SK-N-SH (cell line): ENCODE measurements at regions of chr9 and their contacts with region 1.

Region 1: GRCh38 chr9:98056269-98057137 is at the start of gene NANS:
- DNase-seq: peak; percentile 98
- H3K4me3 ChIP-seq: peak within 1 kb of the TSS; percentile 67 to 96
- H3K27ac ChIP-seq: peak within 1 kb of the TSS; percentile 81 to 85
- H3K4me1 ChIP-seq: peaks cover 3 to 12% of the 10 kb centered on the region in 2 experiments; a peak in 2 of 4 replicates
- H3K27me3 ChIP-seq: no peaks in the 10 kb centered on the region
- CTCF ChIP-seq: peak; percentile 18; the same call in 1 of the 2 replicates
- EP300 ChIP-seq: peak in 1 of 2 experiments; percentile 41; a peak in 1 of 4 replicates
- RAD21 ChIP-seq: peak; percentile 33
- polyA plus RNA-seq, gene NANS: 53.5 and 61.3 TPM in 2 replicates

Region 2: GRCh38 chr9:97666907-97667686 is 389.4 kb before region 1 on chr9:
- CTCF ChIA-PET with region 1: no interaction called
- POLR2A ChIA-PET with region 1: no interaction called
- DNase-seq: no peak
- H3K4me3 ChIP-seq: no peak overlapping the region
- H3K27ac ChIP-seq: no peak overlapping the region
- H3K4me1 ChIP-seq: no peaks in the 10 kb centered on the region
- H3K27me3 ChIP-seq: no peaks in the 10 kb centered on the region
- CTCF ChIP-seq: no peak
- EP300 ChIP-seq: no peak
- RAD21 ChIP-seq: no peak

Region 3: DNA sequence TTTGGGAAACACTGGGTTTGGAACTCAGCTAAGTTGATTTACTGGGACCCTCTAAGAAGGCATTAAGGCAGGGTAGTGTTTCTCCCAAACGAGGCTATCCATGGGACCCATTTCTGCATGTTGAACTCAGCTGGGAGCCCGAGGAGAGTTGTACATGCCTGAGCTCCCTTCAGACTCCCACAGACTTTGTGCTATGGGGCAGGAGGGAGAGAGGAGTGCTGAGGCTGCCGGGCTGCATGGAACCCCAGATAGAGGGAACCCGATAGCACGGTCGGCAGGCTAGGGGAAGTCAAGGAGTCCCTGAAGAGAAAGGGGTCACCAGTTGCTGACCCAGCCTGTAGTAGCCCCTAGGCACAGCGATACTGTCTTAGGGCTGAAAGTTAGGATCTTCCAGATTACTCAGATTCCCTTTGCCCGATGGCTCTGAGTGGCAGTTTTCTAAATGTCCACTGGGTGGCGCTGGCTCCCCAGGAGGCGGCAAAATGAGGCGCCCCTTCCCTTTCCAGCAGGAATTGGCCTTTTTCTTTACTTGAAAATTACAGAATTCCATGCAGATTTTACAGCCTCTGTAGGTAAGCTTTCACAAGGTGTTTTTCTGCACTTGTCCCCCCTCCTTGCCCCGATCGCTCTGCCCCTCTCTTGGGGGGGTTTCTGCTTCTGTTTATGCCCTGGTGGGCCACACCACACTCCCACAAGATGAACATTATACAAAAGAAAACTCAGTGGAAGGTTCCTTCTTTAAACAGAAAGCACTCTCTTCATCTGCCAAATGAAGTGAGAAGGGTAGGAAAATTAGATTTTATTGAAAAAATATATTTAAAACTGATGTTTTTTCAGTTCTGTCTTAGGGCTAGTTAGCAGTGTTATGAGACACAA is 17.9 kb after region 1 on chr9:
- CTCF ChIA-PET with region 1: interaction called, 15 read pairs
- POLR2A ChIA-PET with region 1: no interaction called
- DNase-seq: peak; percentile 79
- H3K4me3 ChIP-seq: no peak overlapping the region
- H3K27ac ChIP-seq: no peak overlapping the region; a peak in 1 of 4 replicates
- H3K4me1 ChIP-seq: no peaks in the 10 kb centered on the region; a peak in 2 of 4 replicates
- H3K27me3 ChIP-seq: no peaks in the 10 kb centered on the region
- CTCF ChIP-seq: peak; percentile 96
- EP300 ChIP-seq: no peak
- RAD21 ChIP-seq: peak; percentile 91